CD8-positive, alpha-beta memory T cell (primary cell): ENCODE measurements at regions of chr10 and their contacts with region 1.

Region 1: GRCh38 chr10:102399217-102400089 is 3.9 kb downstream of the NFKB2 start:
- DNase-seq: peak; percentile 82 to 90 (median 87)
- H3K4me3 ChIP-seq: peak overlapping the region; percentile 28
- H3K4me3 Mint-ChIP-seq: peak overlapping the region; percentile 70 to 97 (median 76)
- H3K27ac ChIP-seq: peak overlapping the region; percentile 61
- H3K27ac Mint-ChIP-seq: peak overlapping the region; percentile 65 to 100 (median 99)
- H3K4me1 ChIP-seq: peaks cover 33% of the 10 kb centered on the region
- H3K4me1 Mint-ChIP-seq: peaks cover 24 to 48% (median 28%) of the 10 kb centered on the region in 3 donors
- H3K27me3 ChIP-seq: no peaks in the 10 kb centered on the region
- H3K27me3 Mint-ChIP-seq: peaks cover 0 to 4% of the 10 kb centered on the region in 2 donors

Region 2: DNA sequence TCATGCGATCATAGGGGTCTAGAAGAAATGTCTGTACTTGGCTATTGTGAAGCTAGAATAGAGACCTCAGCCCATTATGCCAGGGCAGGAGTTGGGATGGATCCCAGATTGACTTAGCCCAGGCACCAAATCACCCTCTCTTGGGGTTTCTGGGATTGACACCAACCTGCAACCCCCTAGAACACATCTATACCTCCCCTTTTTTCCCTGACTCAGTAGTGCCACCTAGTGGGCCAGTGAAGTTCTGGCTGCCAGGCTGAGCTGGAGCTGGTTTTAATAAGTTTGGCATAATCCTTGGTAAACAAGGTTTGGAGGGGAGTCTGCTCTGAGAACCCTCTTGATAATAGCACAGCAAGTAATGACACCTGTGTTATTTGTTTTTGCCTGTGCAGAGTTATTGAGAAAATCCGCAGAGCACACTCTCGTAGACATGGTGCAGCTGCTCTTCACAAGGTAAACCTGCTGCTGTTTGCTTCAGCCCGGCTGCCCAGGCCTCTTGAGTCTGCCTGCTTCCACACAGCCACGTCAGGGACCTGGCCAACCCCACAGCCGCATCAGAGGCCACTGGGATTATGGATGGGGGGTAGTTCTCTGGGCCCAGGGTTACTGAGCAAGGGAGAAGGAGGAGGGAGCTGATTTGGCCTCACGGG is 47.3 kb before region 1 on chr10:
- CTCF ChIA-PET with region 1: interaction called, 11 read pairs
- POLR2A ChIA-PET with region 1: no interaction called
- DNase-seq: peak; percentile 51 to 75 (median 59)
- H3K4me3 ChIP-seq: no peak overlapping the region
- H3K4me3 Mint-ChIP-seq: no peak overlapping the region
- H3K27ac ChIP-seq: no peak overlapping the region
- H3K27ac Mint-ChIP-seq: peak overlapping the region in 3 of 8 donors; percentile 23 to 35 (median 24)
- H3K4me1 ChIP-seq: no peaks in the 10 kb centered on the region
- H3K4me1 Mint-ChIP-seq: peaks cover 0 to 5% (median 0%) of the 10 kb centered on the region in 3 donors
- H3K27me3 ChIP-seq: no peaks in the 10 kb centered on the region
- H3K27me3 Mint-ChIP-seq: no peaks in the 10 kb centered on the region

Region 3: GRCh38 chr10:102414749-102415148 is 15.3 kb after region 1 on chr10:
- CTCF ChIA-PET with region 1: interaction called, 37 read pairs
- POLR2A ChIA-PET with region 1: interaction called, 30 read pairs
- DNase-seq: no peak
- H3K4me3 ChIP-seq: no peak overlapping the region
- H3K4me3 Mint-ChIP-seq: no peak overlapping the region
- H3K27ac ChIP-seq: no peak overlapping the region
- H3K27ac Mint-ChIP-seq: no peak overlapping the region
- H3K4me1 ChIP-seq: peaks cover 21% of the 10 kb centered on the region
- H3K4me1 Mint-ChIP-seq: peaks cover 17 to 36% (median 24%) of the 10 kb centered on the region in 3 donors
- H3K27me3 ChIP-seq: peaks cover 31% of the 10 kb centered on the region
- H3K27me3 Mint-ChIP-seq: peaks cover 39 to 67% of the 10 kb centered on the region in 2 donors

Region 4: DNA sequence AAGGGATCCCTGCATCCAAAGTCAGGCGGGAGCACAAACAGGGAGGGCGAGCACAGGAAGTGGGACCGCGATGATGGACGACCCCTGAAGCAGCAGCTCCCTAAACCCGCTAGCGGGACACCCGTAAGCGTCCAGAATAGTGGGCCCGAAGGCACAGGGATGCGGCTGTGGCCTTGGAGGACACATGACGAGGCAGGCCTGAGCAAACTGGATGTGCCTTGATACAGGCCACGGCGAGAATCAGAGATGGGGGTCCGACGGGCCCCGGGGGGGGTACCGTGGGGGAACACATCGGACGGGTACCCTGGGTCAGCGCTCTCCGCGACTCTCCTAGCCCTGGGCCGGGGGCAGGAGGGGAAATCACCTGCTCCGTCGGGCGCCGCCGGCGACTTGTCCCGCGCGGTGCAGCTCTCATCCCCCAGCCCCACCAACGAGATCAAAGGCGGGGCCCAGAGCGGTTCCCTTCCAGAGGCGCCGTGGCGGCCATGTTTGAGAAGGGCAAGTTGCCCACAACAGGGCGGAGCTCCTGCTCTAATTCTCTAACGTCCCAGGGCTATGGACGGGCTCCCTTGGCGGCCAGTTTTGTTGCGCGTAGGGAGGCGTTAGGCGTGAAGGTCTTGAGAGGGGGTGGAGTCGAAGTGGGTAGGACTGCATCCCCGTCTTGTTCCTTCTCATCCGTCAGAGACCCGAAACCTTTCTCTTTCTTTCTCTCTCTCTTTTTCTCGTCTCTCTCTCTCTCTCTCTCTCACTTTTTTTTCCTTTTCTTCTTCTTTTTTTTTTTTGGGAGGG is 32.9 kb after region 1 on chr10 and contains the start of gene CUEDC2:
- CTCF ChIA-PET with region 1: interaction called, 20 read pairs
- POLR2A ChIA-PET with region 1: interaction called, 4 read pairs
- DNase-seq: peak; percentile 87 to 94 (median 90)
- H3K4me3 ChIP-seq: peak within 1 kb of the TSS; percentile 75
- H3K4me3 Mint-ChIP-seq: peak within 1 kb of the TSS; percentile 89 to 97 (median 93)
- H3K27ac ChIP-seq: peak within 1 kb of the TSS; percentile 70
- H3K27ac Mint-ChIP-seq: peak within 1 kb of the TSS; percentile 84 to 98 (median 88)
- H3K4me1 ChIP-seq: peaks cover 48% of the 10 kb centered on the region
- H3K4me1 Mint-ChIP-seq: peaks cover 31 to 51% (median 42%) of the 10 kb centered on the region in 3 donors
- H3K27me3 ChIP-seq: no peaks in the 10 kb centered on the region
- H3K27me3 Mint-ChIP-seq: peaks cover 0 to 10% of the 10 kb centered on the region in 2 donors
- total RNA-seq, gene CUEDC2: 62.4 to 64.8 TPM

Region 5: GRCh38 chr10:102470579-102471546 is 71.4 kb after region 1 on chr10:
- CTCF ChIA-PET with region 1: interaction called, 12 read pairs
- POLR2A ChIA-PET with region 1: no interaction called
- DNase-seq: no peak
- H3K4me3 ChIP-seq: no peak overlapping the region
- H3K4me3 Mint-ChIP-seq: no peak overlapping the region
- H3K27ac ChIP-seq: no peak overlapping the region
- H3K27ac Mint-ChIP-seq: no peak overlapping the region
- H3K4me1 ChIP-seq: peaks cover 12% of the 10 kb centered on the region
- H3K4me1 Mint-ChIP-seq: peaks cover 12 to 18% (median 13%) of the 10 kb centered on the region in 3 donors
- H3K27me3 ChIP-seq: no peaks in the 10 kb centered on the region
- H3K27me3 Mint-ChIP-seq: no peaks in the 10 kb centered on the region

Region 6: DNA sequence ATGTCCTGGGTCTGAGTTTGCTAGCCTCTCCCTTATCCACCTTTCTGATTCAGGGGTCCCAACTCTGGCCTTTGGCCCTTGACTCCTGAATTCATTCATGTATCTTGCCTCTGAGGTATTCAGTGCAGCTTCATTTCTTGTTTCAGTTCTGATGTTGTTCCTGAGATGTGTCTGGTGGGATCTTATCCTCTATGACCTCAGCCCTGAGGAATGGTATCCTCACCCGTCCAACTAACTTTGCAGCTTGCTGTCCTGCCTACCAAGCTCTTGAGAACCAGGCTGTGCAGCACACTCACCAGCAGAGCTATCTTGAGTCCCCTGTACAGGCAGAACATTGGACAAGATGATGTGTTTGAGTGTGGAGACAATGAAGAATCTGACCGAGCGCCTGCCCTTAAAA is 118.1 kb after region 1 on chr10:
- CTCF ChIA-PET with region 1: no interaction called
- POLR2A ChIA-PET with region 1: no interaction called
- DNase-seq: no peak
- H3K4me3 ChIP-seq: no peak overlapping the region
- H3K4me3 Mint-ChIP-seq: no peak overlapping the region
- H3K27ac ChIP-seq: no peak overlapping the region
- H3K27ac Mint-ChIP-seq: peak overlapping the region in 2 of 8 donors; percentile 36
- H3K4me1 ChIP-seq: no peaks in the 10 kb centered on the region
- H3K4me1 Mint-ChIP-seq: peaks cover 15 to 27% (median 19%) of the 10 kb centered on the region in 3 donors
- H3K27me3 ChIP-seq: no peaks in the 10 kb centered on the region
- H3K27me3 Mint-ChIP-seq: no peaks in the 10 kb centered on the region